Left colon (tissue), 2 donors: ENCODE measurements at regions of chr2 and their contacts with region 1.

Region 1: DNA sequence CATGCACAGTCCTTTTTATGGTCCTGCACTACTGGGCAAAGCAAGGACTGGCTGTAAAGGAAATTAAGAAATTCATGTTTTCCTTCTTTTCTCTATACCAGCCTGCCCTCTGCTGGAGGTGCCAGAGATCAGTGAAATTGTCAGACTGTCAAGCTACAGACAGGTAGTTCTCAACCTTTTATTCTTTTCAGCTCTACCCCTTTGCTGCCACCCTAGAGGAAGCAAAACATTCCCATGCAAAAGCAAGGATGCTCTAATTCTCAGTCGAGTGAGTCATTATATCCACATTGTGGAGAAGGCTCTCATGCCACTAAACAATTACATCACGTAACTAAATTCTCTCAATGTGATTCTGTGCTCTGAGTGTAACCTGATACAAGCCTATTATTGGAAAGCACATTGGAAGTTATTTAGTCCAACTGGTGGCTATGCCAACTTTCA is 25.0 kb upstream of the RAPGEF4 start:
- DNase-seq: peak in 1 of 2 donors; percentile 48
- ATAC-seq: peak; percentile 87

Region 2: DNA sequence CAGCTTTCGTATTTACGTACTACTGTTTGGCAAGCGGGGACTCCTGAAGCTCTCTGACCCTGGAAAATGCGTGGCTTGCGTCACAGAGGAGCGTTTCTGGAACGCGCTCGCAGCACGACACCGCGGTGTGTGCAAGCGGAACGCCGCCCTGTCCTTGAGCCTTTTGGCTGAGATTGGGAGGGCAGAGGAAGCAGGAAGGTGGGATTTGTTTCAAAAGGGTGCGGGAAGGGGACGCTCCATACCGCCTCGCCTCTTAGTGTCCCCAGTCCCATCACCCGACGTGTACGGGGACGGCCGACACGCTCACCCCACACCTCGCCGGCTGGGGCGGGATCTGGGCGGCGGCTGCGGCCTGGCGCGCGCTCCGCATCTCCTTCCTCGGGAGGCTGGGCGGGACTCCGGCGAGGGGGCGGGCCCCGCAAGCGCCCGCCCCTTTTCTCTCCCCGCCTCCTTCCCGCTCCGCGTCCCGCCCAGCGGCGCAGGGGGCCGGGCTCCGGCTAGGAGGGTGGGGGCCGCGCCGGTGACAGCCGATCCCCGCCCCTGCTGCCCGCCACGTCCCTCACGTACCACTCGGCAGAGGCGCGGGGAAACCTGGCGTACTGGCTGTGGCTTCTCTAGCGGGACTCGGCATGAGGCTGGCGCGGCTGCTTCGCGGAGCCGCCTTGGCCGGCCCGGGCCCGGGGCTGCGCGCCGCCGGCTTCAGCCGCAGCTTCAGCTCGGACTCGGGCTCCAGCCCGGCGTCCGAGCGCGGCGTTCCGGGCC is 154.9 kb before region 1 on chr2 and contains the start of gene PDK1:
- intact Hi-C with region 1: no loop called
- DNase-seq: peak; percentile 86 to 91
- ATAC-seq: peak; percentile 93
- total RNA-seq, gene PDK1: 16.9 to 26.2 TPM

Region 3: DNA sequence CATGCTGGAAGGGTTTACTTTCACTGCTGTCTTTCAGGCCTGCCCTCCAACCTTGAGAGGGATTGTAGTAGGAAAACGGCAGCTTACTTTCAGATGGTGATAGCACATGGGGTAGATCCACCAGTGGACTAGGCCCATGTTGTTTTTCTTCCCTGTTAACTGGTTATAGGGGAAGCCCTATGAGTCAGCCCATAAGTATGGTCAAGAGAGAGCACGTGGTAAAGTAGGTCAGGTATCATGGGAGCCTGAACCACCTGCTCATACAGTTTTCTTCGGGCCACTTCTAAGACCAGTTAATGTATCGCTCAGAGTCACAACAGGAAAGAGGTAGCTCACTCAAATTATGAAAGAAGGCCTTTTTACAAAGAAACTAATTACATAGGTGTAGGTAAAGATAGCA is 121.7 kb before region 1 on chr2:
- intact Hi-C with region 1: loop called in 1 of 2 experiments (anchors 2 kb)
- DNase-seq: no peak
- ATAC-seq: no peak

Region 4: DNA sequence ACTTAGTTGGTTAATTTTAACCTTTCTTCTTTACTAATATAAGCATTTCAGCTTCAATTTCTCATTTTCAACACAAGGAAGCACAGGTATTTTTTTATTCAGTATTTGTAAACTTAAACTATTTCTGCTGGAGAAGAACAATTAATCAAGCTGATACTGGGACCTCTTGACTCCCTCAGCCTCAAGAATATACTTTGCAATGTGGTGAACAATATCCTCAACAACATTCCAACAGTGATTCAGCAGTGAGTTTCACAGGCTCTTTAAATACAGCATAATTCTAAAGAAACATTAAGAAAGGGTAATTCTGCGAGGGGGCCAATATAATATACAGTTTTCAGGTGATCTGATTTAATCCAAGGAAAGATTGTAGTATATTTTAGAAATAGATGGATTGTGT is 35.0 kb after region 1 on chr2:
- intact Hi-C with region 1: no loop called
- DNase-seq: no peak
- ATAC-seq: no peak

Region 5: GRCh38 chr2:172806493-172806892 is 95.9 kb after region 1 on chr2:
- intact Hi-C with region 1: no loop called
- DNase-seq: no peak
- ATAC-seq: peak; percentile 74

Region 6: GRCh38 chr2:173146590-173146989 is 436.0 kb after region 1 on chr2:
- intact Hi-C with region 1: no loop called
- DNase-seq: no peak
- ATAC-seq: no peak